WTC11 (cell line): ENCODE measurements at regions of chr10 and their contacts with region 1.

Region 1: DNA sequence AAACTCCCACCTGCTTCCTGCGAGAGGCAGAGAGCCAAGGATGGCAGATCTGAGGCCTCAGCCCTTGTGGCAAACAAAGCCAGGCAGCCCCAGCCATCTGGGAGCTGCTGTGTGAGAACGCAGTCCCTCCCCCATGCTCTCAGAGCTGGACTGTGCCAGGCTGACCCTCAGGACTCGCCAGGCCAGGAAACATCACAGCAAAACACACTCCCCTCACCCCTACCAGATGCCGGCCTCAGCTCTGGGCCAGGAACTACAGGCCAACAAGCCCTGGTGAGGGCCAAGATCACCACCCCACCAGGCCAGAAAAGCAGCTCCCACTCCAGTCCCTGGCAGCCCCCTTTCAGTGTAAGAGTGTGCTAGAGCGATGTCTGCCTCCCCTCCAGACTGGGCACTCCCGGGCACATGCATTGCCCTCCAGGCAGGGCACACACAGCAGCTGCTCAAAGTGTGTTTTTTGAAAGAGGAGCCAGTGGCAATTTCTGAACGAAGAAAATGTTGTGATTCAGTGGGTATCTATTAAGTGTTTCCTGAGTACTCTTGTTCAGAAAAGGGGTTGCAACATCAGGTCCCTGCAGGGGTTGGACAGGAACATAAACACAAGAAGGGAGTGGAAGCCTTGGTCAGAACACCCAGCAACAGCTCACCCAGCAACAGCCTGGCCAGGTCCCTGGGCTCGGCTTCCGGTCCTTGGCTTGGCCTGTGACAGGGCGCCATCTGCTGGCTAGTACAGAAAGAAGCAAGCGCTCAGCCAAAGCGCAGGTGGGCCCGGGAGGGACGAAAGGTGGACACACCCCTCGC is 18.3 kb downstream of the LRRC20 start:
- DNase-seq: peak; percentile 94
- ATAC-seq: peak; percentile 91
- H3K4me3 Mint-ChIP-seq: no peak overlapping the region
- H3K27ac Mint-ChIP-seq: peak overlapping the region; percentile 66
- H3K4me1 Mint-ChIP-seq: peaks cover 16% of the 10 kb centered on the region
- H3K27me3 Mint-ChIP-seq: no peaks in the 10 kb centered on the region
- CTCF ChIP-seq: peak; percentile 70

Region 2: DNA sequence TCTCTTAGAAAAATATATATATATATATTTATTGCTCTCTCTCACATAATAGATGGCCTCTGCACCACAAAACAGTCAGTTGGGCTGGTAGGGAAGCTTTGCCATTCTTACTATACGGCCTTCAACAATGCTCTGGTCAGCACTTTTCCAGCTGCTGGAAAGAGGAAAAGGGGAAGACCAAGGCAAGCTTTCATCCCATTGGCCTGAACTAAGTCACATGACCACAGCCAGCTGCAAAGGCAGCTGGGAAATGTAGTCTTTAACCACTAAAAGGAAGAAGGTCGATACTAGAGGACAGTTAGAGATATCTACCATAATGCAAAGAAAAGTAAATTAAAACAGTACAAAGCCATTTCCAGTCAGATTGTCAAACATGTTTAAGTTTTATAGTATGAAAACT is 369.9 kb before region 1 on chr10:
- CTCF ChIA-PET with region 1: no interaction called
- POLR2A ChIA-PET with region 1: no interaction called
- DNase-seq: no peak
- ATAC-seq: peak; percentile 65; the same call in 1 of the 2 replicates
- H3K4me3 Mint-ChIP-seq: no peak overlapping the region
- H3K27ac Mint-ChIP-seq: no peak overlapping the region
- H3K4me1 Mint-ChIP-seq: no peaks in the 10 kb centered on the region
- H3K27me3 Mint-ChIP-seq: peaks cover 15% of the 10 kb centered on the region
- CTCF ChIP-seq: no peak

Region 3: GRCh38 chr10:70221030-70221429 is 143.1 kb before region 1 on chr10:
- CTCF ChIA-PET with region 1: interaction called, 149 read pairs
- POLR2A ChIA-PET with region 1: interaction called, 4 read pairs
- DNase-seq: no peak
- ATAC-seq: no peak
- H3K4me3 Mint-ChIP-seq: no peak overlapping the region
- H3K27ac Mint-ChIP-seq: no peak overlapping the region
- H3K4me1 Mint-ChIP-seq: peaks cover 3% of the 10 kb centered on the region
- H3K27me3 Mint-ChIP-seq: no peaks in the 10 kb centered on the region
- CTCF ChIP-seq: no peak

Region 4: DNA sequence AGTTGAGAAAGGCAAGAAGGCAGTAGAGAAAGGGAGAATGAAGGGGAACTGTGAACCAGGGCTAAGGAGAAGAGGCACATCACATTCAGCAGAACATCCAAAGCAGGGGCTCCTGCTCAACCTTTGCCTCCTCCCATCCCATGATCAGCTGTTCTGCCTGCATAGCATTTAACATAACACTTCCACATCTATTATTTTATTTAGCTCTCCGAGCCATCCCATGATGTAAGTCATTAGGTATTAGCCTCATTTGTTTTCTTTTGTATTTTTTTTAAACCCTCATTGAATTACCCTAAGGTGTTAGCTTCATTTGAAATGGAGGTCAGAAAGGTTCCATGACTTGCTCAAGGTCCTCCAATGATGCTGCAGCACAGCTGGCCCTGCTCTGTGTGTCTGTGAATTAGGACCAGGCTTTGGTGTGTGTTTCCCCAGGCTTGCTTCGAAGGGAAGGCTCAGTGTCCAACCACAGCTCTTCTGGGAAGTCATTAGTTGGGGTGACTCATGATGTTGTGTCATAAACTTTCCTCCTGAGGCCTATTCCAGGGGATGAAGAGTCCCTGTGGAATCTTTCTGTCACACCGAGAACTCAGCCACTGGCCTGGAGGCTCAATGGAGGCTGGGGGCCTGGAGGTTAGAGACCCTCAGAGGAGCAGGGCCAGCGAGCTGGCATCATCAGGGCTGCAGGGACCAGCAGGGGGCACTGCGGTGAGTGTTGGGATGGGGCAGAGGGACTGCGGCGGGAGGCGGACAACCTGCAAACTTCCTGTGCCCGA is 96.8 kb before region 1 on chr10:
- CTCF ChIA-PET with region 1: interaction called, 177 read pairs
- POLR2A ChIA-PET with region 1: no interaction called
- DNase-seq: peak; percentile 79
- ATAC-seq: peak; percentile 56
- H3K4me3 Mint-ChIP-seq: no peak overlapping the region
- H3K27ac Mint-ChIP-seq: no peak overlapping the region
- H3K4me1 Mint-ChIP-seq: peaks cover 2% of the 10 kb centered on the region
- H3K27me3 Mint-ChIP-seq: peaks cover 9% of the 10 kb centered on the region
- CTCF ChIP-seq: peak; percentile 52

Region 5: GRCh38 chr10:70348228-70348850 is 15.8 kb before region 1 on chr10:
- CTCF ChIA-PET with region 1: interaction called, 38 read pairs
- POLR2A ChIA-PET with region 1: interaction called, 8 read pairs
- DNase-seq: peak; percentile 64
- ATAC-seq: peak; percentile 98
- H3K4me3 Mint-ChIP-seq: no peak overlapping the region
- H3K27ac Mint-ChIP-seq: no peak overlapping the region
- H3K4me1 Mint-ChIP-seq: no peaks in the 10 kb centered on the region
- H3K27me3 Mint-ChIP-seq: no peaks in the 10 kb centered on the region
- CTCF ChIP-seq: no peak; the same call in 1 of the 2 replicates

Region 6: GRCh38 chr10:70404036-70404786 is 40.0 kb after region 1 on chr10 and contains the start of gene EIF4EBP2:
- CTCF ChIA-PET with region 1: interaction called, 17 read pairs
- POLR2A ChIA-PET with region 1: no interaction called
- DNase-seq: peak; percentile 99
- ATAC-seq: peak; percentile 9
- H3K4me3 Mint-ChIP-seq: peak within 1 kb of the TSS; percentile 90
- H3K27ac Mint-ChIP-seq: peak within 1 kb of the TSS; percentile 95
- H3K4me1 Mint-ChIP-seq: peaks cover 36% of the 10 kb centered on the region
- H3K27me3 Mint-ChIP-seq: no peaks in the 10 kb centered on the region
- CTCF ChIP-seq: no peak
- total RNA-seq, gene EIF4EBP2: 111 to 114 TPM (median 112 TPM) in 3 replicates